Mammary epithelial cell (primary cell): ENCODE measurements at regions of chr11 and their contacts with region 1.

Region 1: GRCh38 chr11:62427630-62428233 is 8.9 kb downstream of the SCGB1A1 start:
- DNase-seq: no peak
- H3K4me3 ChIP-seq: no peak overlapping the region
- H3K27ac ChIP-seq: no peak overlapping the region
- H3K4me1 ChIP-seq: peaks cover 4% of the 10 kb centered on the region
- H3K27me3 ChIP-seq: peaks cover 3% of the 10 kb centered on the region
- CTCF ChIP-seq: no peak

Region 2: GRCh38 chr11:62479631-62480201 is 52.0 kb after region 1 on chr11:
- CTCF ChIA-PET with region 1: no interaction called
- dilution Hi-C with region 1: loop called (anchors 5 kb)
- in situ Hi-C with region 1: no loop called
- intact Hi-C with region 1: no loop called
- DNase-seq: no peak
- H3K4me3 ChIP-seq: no peak overlapping the region
- H3K27ac ChIP-seq: no peak overlapping the region
- H3K4me1 ChIP-seq: no peaks in the 10 kb centered on the region
- H3K27me3 ChIP-seq: no peaks in the 10 kb centered on the region
- CTCF ChIP-seq: no peak